ENCODE measurements at regions of chr1 and their contacts with region 1.

Region 1: DNA sequence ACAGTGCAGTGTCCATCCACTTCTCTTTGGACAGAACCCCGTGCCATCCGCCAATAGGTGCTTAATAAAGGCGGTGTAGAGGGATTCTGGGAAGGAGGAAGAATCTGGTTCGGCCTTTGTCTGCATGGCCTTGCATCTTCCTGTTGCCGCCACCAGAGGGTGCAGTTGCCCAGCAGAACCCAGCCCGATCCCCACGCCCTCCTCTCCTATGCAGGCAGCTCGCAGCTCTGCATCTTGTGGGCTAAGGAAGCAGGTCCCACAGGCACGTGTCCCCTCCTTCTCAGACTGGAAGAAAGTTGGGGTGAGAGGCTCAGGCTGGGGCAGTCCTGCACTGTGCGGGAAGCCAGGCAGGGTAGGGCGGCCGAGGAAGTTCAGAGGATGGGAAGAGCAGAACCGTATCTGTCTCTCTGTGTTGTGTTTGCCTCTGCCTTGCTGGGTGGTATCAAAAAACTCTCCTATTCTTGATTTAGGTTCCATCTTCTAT is 20.8 kb downstream of the NAV1 start:
- DNase-seq: peak; percentile 89
- H3K4me3 Mint-ChIP-seq: no peak overlapping the region
- H3K27ac Mint-ChIP-seq: no peak overlapping the region
- H3K4me1 Mint-ChIP-seq: peaks cover 6% of the 10 kb centered on the region
- H3K27me3 Mint-ChIP-seq: no peaks in the 10 kb centered on the region
- CTCF ChIP-seq: peak; percentile 95

Region 2: DNA sequence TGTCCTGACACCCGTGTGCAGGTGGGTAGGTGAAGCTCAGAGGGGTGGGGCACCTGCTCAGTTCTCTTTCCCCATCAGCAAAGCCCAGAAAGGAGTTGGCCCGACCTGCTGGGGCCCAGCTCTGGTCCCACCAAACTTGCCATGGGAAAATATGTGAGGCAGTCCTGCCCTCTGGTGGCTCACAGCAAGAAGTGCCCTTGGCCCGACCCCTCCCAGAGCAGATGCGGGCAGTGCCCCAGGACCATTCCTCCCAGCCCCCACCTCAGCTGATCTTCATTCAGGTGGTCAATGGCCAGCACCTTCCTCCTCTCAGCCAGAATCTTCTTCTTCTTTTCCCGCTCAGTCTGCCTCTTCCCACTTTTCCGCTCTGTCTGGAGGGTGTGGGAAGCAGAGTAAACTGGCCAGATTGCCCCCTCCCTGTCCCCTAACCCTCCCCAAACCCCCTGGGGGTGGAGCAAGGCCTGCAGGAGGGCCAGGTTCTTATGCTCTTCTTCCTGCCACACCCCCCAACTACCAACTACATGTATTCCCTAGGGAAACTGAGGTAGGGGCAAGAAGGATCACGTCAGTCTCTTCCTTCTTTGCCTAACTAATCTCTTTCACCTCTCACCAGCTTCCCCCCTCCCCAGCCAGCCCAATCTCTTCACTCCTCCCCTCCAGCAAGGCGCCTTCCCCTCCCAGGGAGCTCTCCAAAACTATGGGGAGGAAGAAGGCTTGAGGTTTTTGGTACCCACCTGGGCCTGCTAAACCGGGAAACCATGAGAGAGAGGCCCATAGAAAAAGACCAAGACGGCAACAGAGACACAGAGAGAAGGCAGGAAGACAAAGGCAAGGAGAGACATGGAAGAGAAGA is 197.8 kb before region 1 on chr1:
- CTCF ChIA-PET with region 1: no interaction called
- intact Hi-C with region 1: no loop called
- DNase-seq: peak; percentile 75
- H3K4me3 Mint-ChIP-seq: no peak overlapping the region
- H3K27ac Mint-ChIP-seq: no peak overlapping the region
- H3K4me1 Mint-ChIP-seq: no peaks in the 10 kb centered on the region
- H3K27me3 Mint-ChIP-seq: peaks cover 87% of the 10 kb centered on the region
- CTCF ChIP-seq: peak; percentile 95

Region 3: DNA sequence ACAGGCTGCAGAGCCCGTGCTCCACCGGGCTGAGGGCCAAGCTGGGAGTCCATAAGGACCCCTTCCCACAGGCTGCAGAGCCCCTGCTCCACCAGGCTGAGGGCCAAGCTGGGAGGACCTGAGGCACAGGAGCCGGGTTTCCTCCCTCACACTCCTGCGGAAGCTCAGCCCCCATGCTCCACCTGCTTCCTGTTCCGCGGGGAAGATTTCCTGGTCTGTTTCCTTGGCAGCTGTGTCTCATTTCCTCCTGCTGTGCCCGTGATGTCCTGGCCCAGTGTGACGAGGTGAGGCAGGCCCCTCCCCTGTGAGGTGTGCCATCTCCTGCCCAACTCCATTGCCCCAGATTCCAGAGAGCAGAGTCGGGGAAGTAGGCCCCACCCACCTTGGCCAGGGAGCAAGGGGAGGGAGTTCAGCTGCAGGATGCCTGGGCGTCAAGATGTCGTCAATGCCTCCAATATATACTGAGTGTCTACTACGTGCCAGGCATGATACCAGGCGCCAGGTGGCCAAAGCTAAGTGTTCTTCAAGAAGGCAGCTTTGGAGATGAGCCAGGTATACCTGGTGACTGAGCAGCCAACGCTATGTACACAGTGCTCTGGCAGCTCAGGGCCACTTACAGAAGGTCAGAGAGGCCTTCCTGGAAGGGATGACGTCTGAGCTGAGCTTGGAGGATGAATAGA is 38.0 kb after region 1 on chr1:
- CTCF ChIA-PET with region 1: interaction called, 11 read pairs
- intact Hi-C with region 1: no loop called
- DNase-seq: peak; percentile 85
- H3K4me3 Mint-ChIP-seq: no peak overlapping the region
- H3K27ac Mint-ChIP-seq: peak overlapping the region; percentile 22
- H3K4me1 Mint-ChIP-seq: peaks cover 29% of the 10 kb centered on the region
- H3K27me3 Mint-ChIP-seq: peaks cover 36% of the 10 kb centered on the region
- CTCF ChIP-seq: no peak

Region 4: DNA sequence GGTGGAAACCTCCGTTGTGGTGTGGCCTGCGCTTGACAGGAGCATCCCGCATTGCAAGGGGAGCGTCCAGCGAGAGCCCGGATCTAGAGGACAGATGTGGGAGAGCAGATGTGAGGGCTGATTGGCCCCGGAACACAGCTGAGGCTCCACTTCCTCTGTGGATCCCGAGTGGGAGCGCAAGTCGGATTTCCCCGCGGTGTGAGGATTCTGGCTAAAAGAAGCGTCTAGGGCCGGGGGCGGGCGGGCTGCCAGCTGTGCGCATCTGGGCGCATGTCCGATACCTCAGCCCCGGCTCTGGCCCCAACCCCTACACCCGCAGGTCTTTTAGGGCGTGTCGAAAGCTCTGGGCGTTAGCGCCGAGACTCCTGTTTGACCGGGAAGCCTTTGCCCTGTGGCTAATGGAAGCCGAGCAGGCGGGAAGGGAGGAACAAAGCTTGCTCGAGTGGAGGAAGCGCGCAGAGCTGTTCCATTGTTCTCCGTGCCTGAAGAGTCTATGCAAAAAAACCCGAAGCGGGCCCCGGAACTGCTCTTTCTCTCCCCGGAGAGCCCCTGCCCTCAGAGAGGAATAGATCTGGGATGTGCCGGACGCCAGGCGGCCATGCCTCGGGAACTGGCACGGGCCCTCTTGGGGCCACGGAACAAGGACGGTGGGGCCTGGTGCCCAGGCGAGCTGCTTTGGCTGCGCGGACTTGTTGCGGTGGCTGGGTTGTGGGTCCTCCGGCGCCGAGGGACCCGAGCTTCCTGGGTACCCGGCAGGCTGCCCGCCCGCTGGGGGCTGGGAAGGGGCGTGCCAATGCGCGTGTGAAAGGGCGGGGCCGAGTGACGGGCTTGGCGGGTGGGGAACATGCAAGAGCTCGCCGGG is 90.3 kb after region 1 on chr1:
- CTCF ChIA-PET with region 1: no interaction called
- intact Hi-C with region 1: no loop called
- DNase-seq: peak; percentile 64
- H3K4me3 Mint-ChIP-seq: peak overlapping the region; percentile 75
- H3K27ac Mint-ChIP-seq: no peak overlapping the region
- H3K4me1 Mint-ChIP-seq: no peaks in the 10 kb centered on the region
- H3K27me3 Mint-ChIP-seq: peaks cover 72% of the 10 kb centered on the region
- CTCF ChIP-seq: no peak

Region 5: GRCh38 chr1:201703621-201704439 is 144.1 kb after region 1 on chr1:
- CTCF ChIA-PET with region 1: interaction called, 19 read pairs
- intact Hi-C with region 1: loop called (anchors 1 kb)
- DNase-seq: peak; percentile 93
- H3K4me3 Mint-ChIP-seq: no peak overlapping the region
- H3K27ac Mint-ChIP-seq: no peak overlapping the region
- H3K4me1 Mint-ChIP-seq: no peaks in the 10 kb centered on the region
- H3K27me3 Mint-ChIP-seq: no peaks in the 10 kb centered on the region
- CTCF ChIP-seq: peak; percentile 98

Region 6: GRCh38 chr1:201709564-201710295 is 150.0 kb after region 1 on chr1:
- CTCF ChIA-PET with region 1: interaction called, 19 read pairs
- intact Hi-C with region 1: loop called (anchors 1 kb)
- DNase-seq: peak; percentile 88
- H3K4me3 Mint-ChIP-seq: no peak overlapping the region
- H3K27ac Mint-ChIP-seq: no peak overlapping the region
- H3K4me1 Mint-ChIP-seq: peaks cover 25% of the 10 kb centered on the region
- H3K27me3 Mint-ChIP-seq: no peaks in the 10 kb centered on the region
- CTCF ChIP-seq: peak; percentile 97

Region 7: GRCh38 chr1:201792534-201793305 is 233.0 kb after region 1 on chr1:
- CTCF ChIA-PET with region 1: interaction called, 15 read pairs
- intact Hi-C with region 1: loop called (anchors 1 kb)
- DNase-seq: peak; percentile 85
- H3K4me3 Mint-ChIP-seq: no peak overlapping the region
- H3K27ac Mint-ChIP-seq: no peak overlapping the region
- H3K4me1 Mint-ChIP-seq: peaks cover 10% of the 10 kb centered on the region
- H3K27me3 Mint-ChIP-seq: no peaks in the 10 kb centered on the region
- CTCF ChIP-seq: peak; percentile 90